Right ventricle myocardium inferior (tissue), 1 donor: ENCODE measurements at regions of chr11 and their contacts with region 1.

Region 1: DNA sequence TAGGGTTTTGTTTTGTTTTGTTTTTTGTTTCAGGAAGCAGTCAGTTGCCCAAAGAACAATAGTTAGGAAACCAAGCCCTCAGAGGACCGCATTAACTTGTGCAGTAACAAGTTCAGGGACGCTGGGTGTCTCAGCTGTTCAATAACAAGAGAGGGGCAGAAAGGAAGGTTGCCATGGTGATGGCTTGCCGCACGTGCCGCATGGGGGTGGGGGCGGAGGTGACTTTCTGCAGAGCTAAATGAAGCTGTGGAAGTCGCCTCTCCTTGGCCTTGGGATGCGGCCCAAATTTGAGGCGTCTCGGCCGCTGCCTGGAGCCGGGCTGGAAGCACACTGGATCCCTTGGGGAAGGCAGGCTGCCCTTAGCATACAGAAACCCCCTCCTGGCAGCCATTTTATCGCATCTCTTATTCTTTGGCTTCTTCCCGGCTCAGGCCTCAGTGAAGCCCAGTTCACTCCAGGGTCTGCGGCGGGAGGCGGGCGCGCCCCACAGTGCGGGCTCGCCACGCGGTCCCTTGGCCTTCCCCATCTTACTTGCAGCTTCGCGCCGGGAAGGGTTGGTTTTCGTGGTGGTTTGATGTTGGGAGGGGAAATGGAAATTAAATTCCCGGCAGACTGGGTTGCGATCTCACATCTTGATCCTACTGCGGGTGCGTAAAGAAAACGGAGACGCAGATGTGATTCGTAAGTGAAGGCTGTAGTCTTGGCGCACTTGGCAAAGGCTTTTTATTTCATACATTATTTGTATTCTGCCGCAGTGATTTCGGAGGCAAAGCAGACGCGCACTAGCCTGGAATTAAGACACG is 94.3 kb downstream of the SLC17A6 start:
- DNase-seq: peak; percentile 74
- ATAC-seq: peak; percentile 62

Region 2: DNA sequence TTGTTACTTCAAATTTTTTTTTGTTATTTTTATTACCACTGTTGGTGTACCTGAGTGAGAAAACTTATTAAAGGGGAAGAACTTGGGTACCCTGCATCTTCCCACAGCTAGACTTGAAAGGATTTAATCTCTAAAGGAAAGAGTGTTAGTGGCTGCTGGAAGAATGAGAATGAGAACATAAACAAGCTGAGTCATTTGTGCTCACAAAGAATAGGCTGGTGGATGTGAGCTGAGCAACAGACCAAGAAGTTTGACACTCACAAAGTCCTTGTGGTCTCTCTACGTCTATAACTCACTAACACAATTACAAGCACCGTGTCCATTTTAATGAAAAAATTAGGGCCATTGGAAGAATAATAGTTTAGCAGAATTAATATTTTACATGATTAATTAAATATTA is 457.2 kb before region 1 on chr11:
- intact Hi-C with region 1: no loop called
- DNase-seq: no peak
- ATAC-seq: no peak

Region 3: DNA sequence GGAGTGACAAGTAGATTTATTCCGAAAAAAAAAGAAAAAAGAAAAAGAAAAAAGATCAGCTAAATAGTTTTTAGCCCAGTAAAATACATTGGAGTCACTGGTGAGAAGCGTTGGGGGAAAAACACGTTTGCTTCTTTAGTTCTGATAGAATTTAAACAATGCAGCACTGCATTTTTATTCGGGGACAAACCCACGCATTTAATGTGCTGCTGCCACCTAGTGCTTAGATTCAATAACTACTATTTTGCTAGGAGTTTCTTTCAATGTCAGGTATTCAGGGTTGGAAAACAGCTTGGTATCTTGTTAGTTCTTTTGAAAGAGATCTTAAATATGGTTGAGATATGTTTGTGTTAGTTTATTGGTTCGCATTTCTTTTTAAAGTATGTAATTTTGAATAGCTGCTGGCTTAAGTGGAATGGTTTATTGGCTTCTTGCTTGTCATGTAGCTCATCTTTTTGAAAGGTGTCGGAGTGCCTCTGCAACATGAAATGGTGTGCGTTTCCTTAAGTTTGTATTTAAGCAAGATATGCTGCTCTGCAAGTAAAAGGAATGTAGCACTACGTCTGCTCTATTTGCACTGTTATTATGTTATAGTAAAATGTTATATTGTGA is 355.2 kb after region 1 on chr11:
- intact Hi-C with region 1: loop called (anchors 10 kb)
- DNase-seq: no peak
- ATAC-seq: no peak